ENCODE measurements at regions of chr11 and their contacts with region 1.

Region 1: GRCh38 chr11:108069947-108070346 is 51.4 kb upstream of the ACAT1 start:
- DNase-seq: no peak
- ATAC-seq: peak; percentile 90
- H3K4me3 Mint-ChIP-seq: no peak overlapping the region
- H3K27ac Mint-ChIP-seq: no peak overlapping the region
- H3K4me1 Mint-ChIP-seq: peaks cover 18% of the 10 kb centered on the region
- H3K27me3 Mint-ChIP-seq: no peaks in the 10 kb centered on the region

Region 2: DNA sequence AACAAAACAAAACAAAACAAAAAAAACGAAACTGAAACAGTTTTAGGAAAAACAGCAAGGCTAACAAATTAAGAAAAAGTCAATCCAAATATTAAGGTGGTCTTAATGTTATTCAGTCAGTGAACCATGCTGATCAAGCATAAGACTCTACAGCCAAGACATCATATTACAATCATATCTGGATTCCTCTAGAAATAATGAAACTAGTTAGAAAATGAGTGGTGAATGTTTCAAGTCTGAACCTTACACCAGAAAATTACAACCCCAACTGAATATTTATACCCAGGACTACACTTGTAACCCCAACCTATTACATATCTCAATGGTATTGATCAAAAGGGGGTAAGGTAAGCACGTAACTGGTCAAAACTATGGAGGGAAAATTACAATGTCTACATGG is 100.2 kb after region 1 on chr11:
- CTCF ChIA-PET with region 1: no interaction called
- POLR2A ChIA-PET with region 1: no interaction called
- intact Hi-C with region 1: loop called in 1 of 2 experiments (anchors 10 kb)
- DNase-seq: no peak
- ATAC-seq: peak; percentile 77
- H3K4me3 Mint-ChIP-seq: no peak overlapping the region
- H3K27ac Mint-ChIP-seq: peak overlapping the region; percentile 80
- H3K4me1 Mint-ChIP-seq: peaks cover 44% of the 10 kb centered on the region
- H3K27me3 Mint-ChIP-seq: no peaks in the 10 kb centered on the region